CD8-positive, alpha-beta T cell (primary cell): ENCODE measurements at regions of chr10 and their contacts with region 1.

Region 1: DNA sequence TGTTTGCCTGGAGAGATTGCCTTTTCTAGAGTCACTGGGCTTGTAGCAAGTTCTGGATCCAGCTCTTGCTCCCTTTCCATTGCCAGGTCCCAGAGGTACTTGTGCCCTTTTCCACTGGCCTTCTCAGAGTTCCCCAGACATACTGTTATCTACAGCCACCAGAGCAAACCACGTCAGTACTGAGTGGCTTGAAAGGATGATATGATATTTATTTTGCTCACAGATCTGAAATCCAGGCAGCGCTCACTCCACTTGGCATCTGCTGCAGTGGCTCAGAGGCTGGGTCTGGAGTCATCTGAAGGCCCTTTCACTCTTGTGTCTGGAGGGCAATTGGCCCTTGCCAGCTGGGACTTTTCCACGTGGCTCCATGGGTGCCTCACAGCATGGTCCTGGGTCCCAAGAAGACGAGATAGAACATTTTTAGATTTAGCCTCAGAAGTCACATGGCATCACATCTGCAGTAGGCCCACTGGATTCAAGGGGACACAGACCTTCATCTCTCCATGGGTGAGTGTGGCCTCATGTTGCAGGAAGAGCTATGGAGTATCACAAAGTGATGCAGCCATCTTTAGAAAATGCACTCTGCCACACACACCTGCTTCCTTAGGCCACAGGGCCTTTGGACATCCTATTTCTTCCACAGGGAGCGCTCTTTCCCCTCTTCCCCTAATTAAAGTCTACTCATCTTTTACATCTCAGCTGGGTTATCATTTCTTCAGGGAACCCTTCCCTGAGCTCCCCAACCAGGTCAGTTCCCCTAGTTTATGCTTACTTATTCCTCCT is 22.9 kb upstream of the TCF7L2 start:
- DNase-seq: no peak
- ATAC-seq: no peak
- H3K4me3 ChIP-seq: no peak overlapping the region
- H3K4me3 Mint-ChIP-seq: no peak overlapping the region
- H3K27ac ChIP-seq: no peak overlapping the region
- H3K27ac Mint-ChIP-seq: no peak overlapping the region
- H3K4me1 ChIP-seq: no peaks in the 10 kb centered on the region
- H3K4me1 Mint-ChIP-seq: no peaks in the 10 kb centered on the region
- H3K27me3 ChIP-seq: no peaks in the 10 kb centered on the region
- H3K27me3 Mint-ChIP-seq: peaks cover 5% of the 10 kb centered on the region
- CTCF ChIP-seq: no peak

Region 2: DNA sequence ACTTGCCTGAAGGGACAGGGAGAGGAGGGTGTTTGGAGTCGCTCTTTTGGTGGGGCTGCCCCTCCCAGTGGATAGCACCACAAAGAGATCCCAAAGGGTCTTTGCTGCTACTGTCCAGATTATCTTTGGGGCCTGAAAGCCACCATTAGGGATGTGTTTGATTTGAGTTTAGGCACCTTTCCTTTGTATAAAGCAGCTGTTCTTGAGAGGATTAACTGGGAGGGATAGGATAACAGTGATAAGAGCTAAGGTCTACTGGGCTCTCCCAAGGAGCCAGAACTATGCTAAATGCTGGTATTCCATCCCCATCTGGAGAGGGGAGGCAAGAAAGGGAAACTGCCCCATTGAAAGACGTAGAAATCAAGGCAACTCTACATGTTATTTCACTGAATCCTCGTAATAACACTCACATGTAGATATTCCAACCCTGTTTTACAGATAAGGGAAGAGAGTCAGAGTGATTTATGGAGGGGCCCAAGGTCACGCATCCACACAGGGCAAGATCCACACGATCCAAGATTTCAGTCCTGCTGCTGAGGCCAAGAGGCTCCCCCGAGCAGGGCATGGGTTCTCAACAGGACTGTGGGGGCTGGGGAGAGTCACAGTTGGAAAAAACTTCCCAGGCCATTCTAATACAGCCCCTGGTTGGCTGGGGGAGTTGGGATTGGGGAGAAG is 11.8 kb after region 1 on chr10:
- CTCF ChIA-PET with region 1: no interaction called
- POLR2A ChIA-PET with region 1: no interaction called
- intact Hi-C with region 1: no loop called
- DNase-seq: no peak
- ATAC-seq: no peak
- H3K4me3 ChIP-seq: no peak overlapping the region
- H3K4me3 Mint-ChIP-seq: no peak overlapping the region
- H3K27ac ChIP-seq: no peak overlapping the region
- H3K27ac Mint-ChIP-seq: no peak overlapping the region
- H3K4me1 ChIP-seq: no peaks in the 10 kb centered on the region
- H3K4me1 Mint-ChIP-seq: no peaks in the 10 kb centered on the region
- H3K27me3 ChIP-seq: no peaks in the 10 kb centered on the region
- H3K27me3 Mint-ChIP-seq: no peaks in the 10 kb centered on the region
- CTCF ChIP-seq: no peak

Region 3: DNA sequence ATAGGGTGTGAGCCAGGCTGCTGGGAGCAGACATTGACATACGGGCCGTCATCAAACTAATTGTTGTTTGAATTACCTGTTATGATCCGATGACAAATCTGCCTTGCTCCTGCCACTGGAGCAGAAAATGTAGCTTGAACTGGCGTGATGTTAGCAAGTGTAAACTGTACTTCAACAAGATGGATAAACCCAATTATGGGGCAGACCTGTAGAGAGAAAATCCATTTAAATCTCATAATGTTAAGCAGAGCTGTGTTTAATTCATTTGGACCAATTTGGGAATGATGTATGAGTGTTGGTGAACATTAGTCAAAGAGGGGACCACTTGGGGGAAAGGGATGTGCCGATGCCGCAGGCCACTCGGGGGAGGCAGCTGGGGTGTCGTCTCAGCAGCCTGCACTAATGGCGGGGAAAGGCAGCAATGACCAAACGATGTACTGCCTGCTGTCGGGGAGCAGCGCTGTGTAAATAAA is 50.4 kb after region 1 on chr10:
- CTCF ChIA-PET with region 1: no interaction called
- POLR2A ChIA-PET with region 1: no interaction called
- intact Hi-C with region 1: loop called in 1 of 2 experiments (anchors 5 kb)
- DNase-seq: no peak
- ATAC-seq: no peak
- H3K4me3 ChIP-seq: no peak overlapping the region
- H3K4me3 Mint-ChIP-seq: no peak overlapping the region
- H3K27ac ChIP-seq: no peak overlapping the region
- H3K27ac Mint-ChIP-seq: no peak overlapping the region
- H3K4me1 ChIP-seq: peaks cover 10% of the 10 kb centered on the region
- H3K4me1 Mint-ChIP-seq: peaks cover 11% of the 10 kb centered on the region
- H3K27me3 ChIP-seq: no peaks in the 10 kb centered on the region
- H3K27me3 Mint-ChIP-seq: peaks cover 21% of the 10 kb centered on the region
- CTCF ChIP-seq: no peak